IMR-90 (cell line): ENCODE measurements at regions of chr4 and their contacts with region 1.

Region 1: GRCh38 chr4:26812049-26812714 is 48.5 kb upstream of the STIM2 start:
- DNase-seq: no peak
- ATAC-seq: no peak
- H3K4me3 ChIP-seq: no peak overlapping the region
- H3K27ac ChIP-seq: no peak overlapping the region
- H3K4me1 ChIP-seq: peaks cover 2% of the 10 kb centered on the region; the same call in 1 of the 2 replicates
- H3K27me3 ChIP-seq: no peaks in the 10 kb centered on the region; the same call in 1 of the 2 replicates
- CTCF ChIP-seq: no peak
- POLR2A ChIP-seq: no peak
- RAD21 ChIP-seq: no peak

Region 2: DNA sequence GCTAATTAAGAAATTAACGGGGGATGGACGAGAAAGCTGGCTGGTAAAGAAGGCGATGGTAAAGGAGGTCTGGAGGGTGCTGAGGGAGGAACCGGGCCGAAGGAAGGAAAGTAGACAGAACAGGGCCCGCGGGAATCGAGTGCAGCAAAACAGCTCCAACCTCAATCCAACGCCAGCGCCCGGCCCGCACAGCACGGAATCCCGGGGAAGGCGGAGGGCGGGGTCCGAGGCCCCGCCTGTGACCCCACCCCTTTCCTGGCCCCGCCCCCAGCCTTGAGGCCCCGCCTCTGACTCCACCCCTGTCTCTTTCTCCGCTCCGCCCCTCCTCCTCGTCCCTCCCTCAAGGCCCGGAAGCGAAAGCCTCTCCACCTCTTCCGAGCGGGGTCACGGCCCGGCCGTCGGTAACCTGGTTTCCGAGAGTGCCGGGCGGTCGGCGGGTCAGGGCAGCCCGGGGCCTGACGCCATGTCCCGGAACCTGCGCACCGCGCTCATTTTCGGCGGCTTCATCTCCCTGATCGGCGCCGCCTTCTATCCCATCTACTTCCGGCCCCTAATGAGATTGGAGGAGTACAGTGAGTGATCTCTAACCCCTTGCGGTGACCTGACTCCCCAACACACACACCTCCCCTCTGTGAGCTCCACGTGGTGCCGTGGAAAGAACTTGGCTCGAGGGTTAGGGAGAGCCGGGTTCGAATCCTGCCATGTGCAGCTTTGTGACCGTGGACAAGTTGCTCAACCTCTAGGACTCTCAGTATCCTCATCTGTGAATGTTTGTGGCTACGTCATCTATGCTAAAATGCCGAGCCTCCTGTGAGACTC is 898.1 kb before region 1 on chr4 and contains the start of gene SMIM20:
- CTCF ChIA-PET with region 1: no interaction called
- POLR2A ChIA-PET with region 1: no interaction called
- dilution Hi-C with region 1: no loop called
- in situ Hi-C with region 1: no loop called
- intact Hi-C with region 1: no loop called
- DNase-seq: peak; percentile 86
- ATAC-seq: peak; percentile 98
- H3K4me3 ChIP-seq: peak within 1 kb of the TSS; percentile 54
- H3K27ac ChIP-seq: peak within 1 kb of the TSS; percentile 78
- H3K4me1 ChIP-seq: peaks cover 6% of the 10 kb centered on the region
- H3K27me3 ChIP-seq: no peaks in the 10 kb centered on the region
- CTCF ChIP-seq: no peak
- POLR2A ChIP-seq: peak; percentile 70; the same call in 1 of the 2 replicates
- RAD21 ChIP-seq: no peak
- total RNA-seq, gene SMIM20: 13.6 and 24.4 TPM in 2 replicates

Region 3: GRCh38 chr4:26780539-26780938 is 31.6 kb before region 1 on chr4:
- CTCF ChIA-PET with region 1: no interaction called
- POLR2A ChIA-PET with region 1: interaction called, 10 read pairs
- dilution Hi-C with region 1: no loop called
- in situ Hi-C with region 1: no loop called
- intact Hi-C with region 1: no loop called
- DNase-seq: peak; percentile 48
- ATAC-seq: peak; percentile 28
- H3K4me3 ChIP-seq: no peak overlapping the region
- H3K27ac ChIP-seq: no peak overlapping the region
- H3K4me1 ChIP-seq: peaks cover 4% of the 10 kb centered on the region
- H3K27me3 ChIP-seq: no peaks in the 10 kb centered on the region
- CTCF ChIP-seq: no peak
- POLR2A ChIP-seq: no peak
- RAD21 ChIP-seq: no peak